ENCODE measurements at regions of chr1 and their contacts with region 1.

Region 1: DNA sequence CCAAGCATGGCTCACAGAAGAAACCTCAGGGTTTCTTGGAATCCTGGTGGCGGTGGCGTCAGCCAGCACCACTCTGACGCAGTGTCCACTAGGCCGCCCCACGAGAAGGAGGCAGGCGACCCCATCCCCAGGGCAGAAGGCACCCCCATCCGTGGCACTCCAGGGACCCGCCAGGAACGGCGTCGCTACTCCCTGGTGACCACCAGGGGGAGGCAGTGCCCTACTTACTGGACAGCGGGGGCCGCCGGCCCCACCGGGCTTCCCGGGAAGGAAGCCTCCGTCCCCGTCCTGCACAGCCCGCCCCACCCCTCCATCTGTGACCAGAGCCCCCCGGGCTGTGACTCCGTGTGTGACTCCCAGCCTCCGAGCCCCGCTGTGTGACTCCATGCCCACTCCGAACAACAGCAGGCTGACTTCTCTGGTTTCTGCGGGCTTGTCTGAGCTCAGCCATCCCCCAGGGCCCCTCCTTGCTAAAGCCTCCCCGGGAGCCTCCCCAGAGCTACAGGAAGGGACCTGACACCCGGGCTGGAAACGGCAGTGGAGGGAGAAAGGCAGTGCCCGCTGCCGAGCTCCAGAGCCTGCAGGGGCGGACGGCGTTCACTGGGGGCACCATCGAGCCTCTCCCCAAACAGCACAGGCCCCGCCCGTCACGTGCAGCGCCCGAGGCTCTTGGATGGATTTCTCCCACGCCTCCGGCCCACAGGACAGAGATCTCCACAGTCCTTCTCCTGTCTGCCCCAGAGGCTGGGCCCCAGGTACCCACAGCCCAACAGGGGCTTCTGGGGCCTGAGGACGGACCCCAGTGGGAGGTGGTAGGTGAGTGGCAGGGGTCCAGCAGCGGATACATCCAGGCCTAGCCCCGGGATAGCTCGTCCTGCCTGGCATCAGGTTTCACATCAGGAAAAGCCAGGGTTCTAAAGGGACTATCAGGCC is 21.1 kb downstream of the KIF17 start:
- DNase-seq: peak; percentile 38 to 80 (median 65)
- ATAC-seq: peak; percentile 94 to 96 (median 94)
- H3K4me3 ChIP-seq: peak overlapping the region; percentile 70 to 88
- H3K4me3 Mint-ChIP-seq: peak overlapping the region; percentile 81 to 90 (median 86)
- H3K27ac ChIP-seq: no peak overlapping the region
- H3K27ac Mint-ChIP-seq: peak overlapping the region in 1 of 2 donors; percentile 63
- H3K4me1 ChIP-seq: peaks cover 0 to 15% of the 10 kb centered on the region in 2 experiments
- H3K4me1 Mint-ChIP-seq: peaks cover 6 to 10% (median 8%) of the 10 kb centered on the region in 3 donors
- H3K27me3 ChIP-seq: peaks cover 0 to 35% of the 10 kb centered on the region in 2 experiments
- H3K27me3 Mint-ChIP-seq: no peaks in the 10 kb centered on the region

Region 2: DNA sequence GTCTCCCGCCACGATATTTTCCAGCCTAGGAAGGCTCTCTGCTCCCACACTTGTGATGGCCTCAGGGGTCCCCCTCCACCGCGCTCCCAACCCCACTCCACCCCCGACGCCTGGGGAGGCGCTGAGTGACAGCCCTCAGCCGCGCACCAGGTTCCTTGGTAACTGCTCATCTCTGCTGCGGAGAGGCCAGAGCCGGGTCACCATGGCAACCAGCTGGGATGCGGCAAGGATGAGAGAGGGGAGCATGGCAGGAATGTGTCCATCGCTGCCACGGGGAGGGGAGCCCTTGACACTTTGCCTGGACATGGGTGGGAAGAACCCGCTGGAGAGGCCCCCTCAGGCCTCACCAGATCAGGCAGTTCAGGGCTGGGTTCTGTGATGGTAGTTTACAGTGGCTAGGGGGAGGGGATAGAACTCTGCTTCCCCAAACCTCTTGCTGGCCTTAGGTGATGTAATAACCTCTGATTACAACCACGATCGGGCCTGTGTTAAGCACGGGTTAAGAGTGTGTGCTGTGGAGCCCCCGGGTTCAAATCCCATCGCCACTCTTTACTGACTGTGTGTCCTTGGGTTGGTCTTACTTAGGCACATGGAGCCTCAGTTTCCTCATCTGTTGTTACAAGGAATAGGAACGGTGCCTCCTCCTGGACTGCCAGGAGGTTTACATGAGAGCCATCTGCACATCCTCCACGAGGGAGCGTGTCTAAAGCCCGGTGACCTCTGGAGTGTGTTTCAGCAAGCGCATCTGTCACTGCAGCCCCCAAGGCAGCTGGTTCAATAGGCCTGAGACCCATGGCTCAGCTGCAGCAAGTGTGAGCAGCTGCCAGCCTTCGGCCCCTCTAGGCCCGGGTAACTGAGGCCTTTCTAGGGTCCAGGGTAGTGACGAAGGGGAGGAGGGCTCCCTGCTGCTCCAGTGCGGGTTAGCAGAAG is 14.9 kb after region 1 on chr1:
- CTCF ChIA-PET with region 1: no interaction called
- POLR2A ChIA-PET with region 1: no interaction called
- DNase-seq: no peak
- ATAC-seq: no peak
- H3K4me3 ChIP-seq: no peak overlapping the region
- H3K4me3 Mint-ChIP-seq: no peak overlapping the region
- H3K27ac ChIP-seq: no peak overlapping the region
- H3K27ac Mint-ChIP-seq: no peak overlapping the region
- H3K4me1 ChIP-seq: no peaks in the 10 kb centered on the region
- H3K4me1 Mint-ChIP-seq: peaks cover 0 to 4% (median 2%) of the 10 kb centered on the region in 3 donors
- H3K27me3 ChIP-seq: peaks cover 0 to 54% of the 10 kb centered on the region in 2 experiments
- H3K27me3 Mint-ChIP-seq: peaks cover 13 to 18% of the 10 kb centered on the region in 2 donors

Region 3: DNA sequence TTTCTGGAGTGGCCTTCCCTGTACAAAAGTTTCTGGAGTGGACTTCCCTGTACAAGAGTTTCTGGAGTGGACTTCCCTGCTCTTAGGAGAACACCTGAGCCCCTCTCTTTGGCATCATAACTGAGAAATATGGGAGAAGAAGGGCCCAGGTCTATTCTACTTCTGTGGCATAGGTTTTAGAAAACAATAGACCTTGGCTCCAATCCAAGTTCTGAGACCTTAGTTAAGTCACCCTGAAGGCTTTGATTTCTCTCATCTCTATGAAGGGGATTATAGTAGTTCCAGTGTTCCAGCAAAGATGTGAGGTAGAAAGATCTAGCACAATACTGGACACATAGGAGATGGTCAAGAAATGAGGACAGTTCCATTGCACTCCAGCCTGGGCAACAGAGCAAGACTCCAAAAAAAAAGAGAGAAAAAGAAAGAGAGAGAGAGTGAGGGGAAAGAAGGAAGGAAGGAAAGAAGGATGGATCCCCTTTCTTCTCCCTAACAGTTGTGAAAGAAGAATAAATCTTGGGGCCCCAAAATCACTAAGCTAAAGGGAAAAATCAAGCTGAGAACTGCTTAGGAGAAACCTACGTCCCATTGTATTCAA is 493.3 kb after region 1 on chr1:
- CTCF ChIA-PET with region 1: interaction called, 19 to 24 read pairs
- POLR2A ChIA-PET with region 1: interaction called in 1 of 2 experiments, 3 read pairs
- DNase-seq: no peak
- ATAC-seq: no peak
- H3K4me3 ChIP-seq: no peak overlapping the region
- H3K4me3 Mint-ChIP-seq: no peak overlapping the region
- H3K27ac ChIP-seq: no peak overlapping the region
- H3K27ac Mint-ChIP-seq: no peak overlapping the region
- H3K4me1 ChIP-seq: peaks cover 0 to 11% of the 10 kb centered on the region in 2 experiments
- H3K4me1 Mint-ChIP-seq: peaks cover 0 to 5% (median 3%) of the 10 kb centered on the region in 3 donors
- H3K27me3 ChIP-seq: peaks cover 0 to 4% of the 10 kb centered on the region in 2 experiments
- H3K27me3 Mint-ChIP-seq: peaks cover 2 to 3% of the 10 kb centered on the region in 2 donors

Measured in T-cell (primary cell).